Mammary epithelial cell (primary cell): ENCODE measurements at regions of chr2 and their contacts with region 1.

Region 1: GRCh38 chr2:19667085-19667484 is 234.7 kb downstream of the TTC32 start:
- DNase-seq: peak; percentile 54
- H3K4me3 ChIP-seq: no peak overlapping the region
- H3K27ac ChIP-seq: no peak overlapping the region
- H3K4me1 ChIP-seq: peaks cover 16% of the 10 kb centered on the region
- H3K27me3 ChIP-seq: no peaks in the 10 kb centered on the region
- CTCF ChIP-seq: peak; percentile 28 to 63

Region 2: GRCh38 chr2:18749912-18750526 is 917.1 kb before region 1 on chr2:
- CTCF ChIA-PET with region 1: no interaction called
- dilution Hi-C with region 1: no loop called
- in situ Hi-C with region 1: no loop called
- intact Hi-C with region 1: loop called (anchors 5 kb)
- DNase-seq: peak; percentile 35
- H3K4me3 ChIP-seq: no peak overlapping the region
- H3K27ac ChIP-seq: no peak overlapping the region
- H3K4me1 ChIP-seq: peaks cover 9% of the 10 kb centered on the region
- H3K27me3 ChIP-seq: no peaks in the 10 kb centered on the region
- CTCF ChIP-seq: peak; percentile 73 to 81

Region 3: GRCh38 chr2:19272039-19272438 is 395.0 kb before region 1 on chr2:
- CTCF ChIA-PET with region 1: no interaction called
- dilution Hi-C with region 1: no loop called
- in situ Hi-C with region 1: no loop called
- intact Hi-C with region 1: no loop called
- DNase-seq: no peak
- H3K4me3 ChIP-seq: no peak overlapping the region
- H3K27ac ChIP-seq: no peak overlapping the region
- H3K4me1 ChIP-seq: no peaks in the 10 kb centered on the region
- H3K27me3 ChIP-seq: no peaks in the 10 kb centered on the region
- CTCF ChIP-seq: no peak

Region 4: DNA sequence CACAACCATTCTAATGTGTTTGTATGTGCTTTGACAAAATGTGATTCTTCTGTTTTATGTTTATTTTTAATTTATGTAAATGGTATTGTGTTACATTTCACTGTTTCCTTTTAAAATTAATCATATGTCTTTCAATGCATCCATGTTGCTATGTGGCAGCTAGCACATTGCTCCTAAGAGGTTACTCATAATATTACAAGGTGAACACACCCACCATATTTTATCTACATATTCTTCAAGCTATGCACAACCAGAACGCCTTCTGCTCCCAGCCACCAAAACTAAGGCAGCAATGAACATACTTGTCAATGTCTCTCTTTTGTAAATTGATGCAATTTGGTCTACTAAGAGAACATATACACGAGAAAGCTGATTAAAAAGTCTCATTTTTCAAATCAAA is 148.0 kb before region 1 on chr2:
- CTCF ChIA-PET with region 1: no interaction called
- dilution Hi-C with region 1: no loop called
- in situ Hi-C with region 1: no loop called
- intact Hi-C with region 1: no loop called
- DNase-seq: no peak
- H3K4me3 ChIP-seq: no peak overlapping the region
- H3K27ac ChIP-seq: no peak overlapping the region
- H3K4me1 ChIP-seq: no peaks in the 10 kb centered on the region
- H3K27me3 ChIP-seq: no peaks in the 10 kb centered on the region
- CTCF ChIP-seq: no peak

Region 5: DNA sequence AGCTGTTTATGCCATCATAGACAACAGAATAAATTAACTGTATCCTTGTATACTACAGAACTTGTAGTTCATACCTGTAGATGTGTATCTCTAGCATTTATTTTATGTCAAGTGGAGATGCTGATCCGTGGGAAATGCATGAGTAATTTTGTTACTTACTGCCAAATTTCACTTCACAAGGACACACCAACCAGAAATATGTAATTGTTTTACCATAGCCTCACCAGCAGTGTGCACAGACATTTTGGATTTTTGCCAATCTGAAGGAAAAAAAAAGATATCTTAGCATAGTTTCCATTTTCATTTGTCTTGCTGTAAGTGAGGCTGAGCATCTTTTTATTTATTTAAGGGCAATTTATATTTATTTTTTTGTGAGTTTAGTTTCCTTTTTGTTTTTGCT is 43.6 kb before region 1 on chr2:
- CTCF ChIA-PET with region 1: no interaction called
- dilution Hi-C with region 1: no loop called
- in situ Hi-C with region 1: no loop called
- intact Hi-C with region 1: loop called (anchors 5 kb)
- DNase-seq: peak; percentile 90
- H3K4me3 ChIP-seq: no peak overlapping the region
- H3K27ac ChIP-seq: peak overlapping the region; percentile 60
- H3K4me1 ChIP-seq: peaks cover 9% of the 10 kb centered on the region
- H3K27me3 ChIP-seq: no peaks in the 10 kb centered on the region
- CTCF ChIP-seq: no peak

Region 6: GRCh38 chr2:19801367-19802080 is 134.4 kb after region 1 on chr2:
- CTCF ChIA-PET with region 1: no interaction called
- dilution Hi-C with region 1: no loop called
- in situ Hi-C with region 1: no loop called
- intact Hi-C with region 1: no loop called
- DNase-seq: peak; percentile 94
- H3K4me3 ChIP-seq: no peak overlapping the region
- H3K27ac ChIP-seq: no peak overlapping the region
- H3K4me1 ChIP-seq: peaks cover 35% of the 10 kb centered on the region
- H3K27me3 ChIP-seq: peaks cover 4% of the 10 kb centered on the region
- CTCF ChIP-seq: no peak